Thyroid gland (tissue), 4 donors: ENCODE measurements at regions of chr19 and their contacts with region 1.

Region 1: GRCh38 chr19:2273356-2274184 is 8.4 kb downstream of the PEAK3 start:
- DNase-seq: peak; percentile 64 to 69
- H3K4me3 ChIP-seq: no peak overlapping the region
- H3K27ac ChIP-seq: peak overlapping the region; percentile 16 to 70 (median 60)
- H3K4me1 ChIP-seq: peaks cover 12 to 41% of the 10 kb centered on the region in 2 donors
- H3K27me3 ChIP-seq: no peaks in the 10 kb centered on the region
- CTCF ChIP-seq: peak; percentile 76 to 99 (median 92)
- POLR2A ChIP-seq: no peak

Region 2: DNA sequence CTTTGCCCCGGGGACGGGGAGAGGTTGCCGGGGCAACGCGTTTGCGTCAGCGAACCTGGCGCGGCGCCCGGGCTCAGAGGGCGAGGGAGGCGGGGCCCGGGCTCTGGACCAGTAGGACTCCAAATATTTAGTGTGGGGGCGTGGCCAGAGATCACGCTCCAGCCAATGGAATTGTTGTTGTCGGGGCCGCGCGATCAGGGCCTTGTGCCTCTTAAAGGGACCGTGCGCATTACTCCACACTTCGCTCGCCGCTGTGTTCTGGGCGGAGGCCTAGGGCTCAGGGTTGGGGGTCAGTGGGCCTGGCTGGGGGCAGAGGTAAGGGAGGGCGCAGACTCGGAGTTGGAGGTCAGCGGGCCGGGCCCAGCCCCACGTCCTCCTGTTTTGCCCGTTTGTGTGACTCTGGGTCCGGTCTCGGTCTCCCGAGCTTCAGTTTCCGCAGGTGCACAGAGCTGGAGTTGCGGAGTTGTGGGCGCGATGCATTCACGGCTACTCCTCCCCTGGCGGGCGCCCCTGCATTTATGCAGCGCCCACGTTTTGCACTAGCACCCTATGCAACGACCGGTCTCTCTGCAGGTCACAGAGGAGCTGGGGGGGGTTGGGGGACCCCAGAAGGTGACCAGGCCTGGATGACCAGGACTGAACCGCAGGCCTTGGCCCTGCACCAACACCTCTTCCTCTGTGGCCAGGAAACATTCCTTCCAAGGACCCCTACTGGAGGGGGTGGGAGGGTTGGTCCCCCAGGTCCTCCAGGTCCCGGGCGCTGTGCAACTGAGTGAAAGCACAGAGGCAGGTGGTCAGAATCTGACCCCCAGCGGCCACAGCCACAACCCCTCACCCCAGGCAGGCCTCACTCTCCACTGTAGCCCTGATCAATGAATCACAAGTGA is 211.8 kb before region 1 on chr19:
- intact Hi-C with region 1: no loop called
- DNase-seq: peak; percentile 100
- H3K4me3 ChIP-seq: peak overlapping the region in 2 of 3 donors; percentile 73 to 81
- H3K27ac ChIP-seq: peak overlapping the region; percentile 96 to 100 (median 100)
- H3K4me1 ChIP-seq: peaks cover 32 to 48% of the 10 kb centered on the region in 2 donors
- H3K27me3 ChIP-seq: no peaks in the 10 kb centered on the region
- CTCF ChIP-seq: peak in 1 of 6 experiments; percentile 20
- POLR2A ChIP-seq: peak in 1 of 2 donors; percentile 7

Region 3: GRCh38 chr19:2164020-2164998 is 109.3 kb before region 1 on chr19:
- intact Hi-C with region 1: loop called (anchors 5 kb)
- DNase-seq: peak; percentile 26 to 34
- H3K4me3 ChIP-seq: peak overlapping the region; percentile 18 to 91 (median 66)
- H3K27ac ChIP-seq: peak overlapping the region; percentile 81 to 98 (median 93)
- H3K4me1 ChIP-seq: peaks cover 35 to 47% of the 10 kb centered on the region in 2 donors
- H3K27me3 ChIP-seq: no peaks in the 10 kb centered on the region
- CTCF ChIP-seq: no peak
- POLR2A ChIP-seq: no peak

Region 4: DNA sequence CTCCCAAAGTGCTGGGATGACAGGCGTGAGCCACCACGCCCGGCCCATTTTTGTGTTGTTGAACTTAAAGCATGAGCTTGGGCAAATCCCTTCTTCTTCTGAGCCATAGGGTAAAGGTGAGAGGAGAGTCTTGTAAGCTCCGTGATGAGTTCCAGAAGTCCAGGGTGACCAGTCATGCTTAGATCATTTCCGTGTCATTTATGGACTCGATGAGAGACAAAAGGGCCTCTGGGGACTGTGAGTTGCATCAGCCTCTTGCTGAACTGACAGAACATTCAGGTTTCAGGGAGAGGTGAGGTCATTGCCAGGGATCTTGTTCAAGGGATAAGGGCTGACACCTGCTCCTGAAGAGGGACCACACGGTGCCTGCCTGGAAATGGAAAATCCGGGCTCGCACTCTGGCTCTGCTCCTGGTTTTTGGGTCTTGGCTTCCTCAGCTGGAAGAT is 255.9 kb after region 1 on chr19:
- intact Hi-C with region 1: no loop called
- DNase-seq: no peak
- H3K4me3 ChIP-seq: no peak overlapping the region
- H3K27ac ChIP-seq: no peak overlapping the region
- H3K4me1 ChIP-seq: peaks cover 4 to 12% of the 10 kb centered on the region in 2 donors
- H3K27me3 ChIP-seq: no peaks in the 10 kb centered on the region
- CTCF ChIP-seq: no peak
- POLR2A ChIP-seq: no peak